Psoas muscle (tissue), 8 donors: ENCODE measurements at regions of chr3 and their contacts with region 1.

Region 1: DNA sequence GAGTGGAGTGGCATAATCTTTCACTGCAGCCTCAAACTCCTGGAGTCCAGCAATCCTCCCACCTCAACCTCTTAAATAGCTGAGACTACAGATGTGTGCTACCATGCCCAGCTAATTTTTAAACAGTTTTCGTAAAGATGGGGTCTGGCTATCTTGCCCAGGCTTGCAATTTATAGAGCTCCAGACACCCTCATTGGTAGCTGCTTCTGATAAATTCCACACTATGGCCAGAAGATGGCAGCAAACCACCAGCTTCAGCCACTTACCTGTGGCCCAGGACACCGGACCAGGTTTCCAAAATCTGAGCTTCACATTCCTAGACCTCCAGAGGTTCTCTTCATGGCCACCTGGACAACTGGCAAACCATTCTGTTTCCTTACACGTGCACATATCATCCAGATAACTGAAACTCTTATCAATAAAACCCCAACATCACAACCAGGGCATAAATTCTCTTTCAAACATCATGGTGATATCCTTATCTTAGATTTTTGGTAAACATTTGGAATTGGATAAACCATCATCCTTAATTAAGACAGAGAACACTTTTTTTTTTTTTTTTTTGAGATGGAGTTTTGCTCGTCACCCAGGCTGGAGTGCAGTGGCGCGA is 28.9 kb downstream of the FBXW12 start:
- DNase-seq: peak; percentile 28 to 56
- ATAC-seq: peak; percentile 61 to 87 (median 68)
- H3K4me3 ChIP-seq: no peak overlapping the region
- H3K27ac ChIP-seq: no peak overlapping the region
- H3K4me1 ChIP-seq: no peaks in the 10 kb centered on the region
- H3K27me3 ChIP-seq: peaks cover 0 to 5% (median 0%) of the 10 kb centered on the region in 3 donors
- CTCF ChIP-seq: peak; percentile 72

Region 2: GRCh38 chr3:48273594-48274211 is 127.2 kb before region 1 on chr3:
- intact Hi-C with region 1: loop called in 1 of 2 experiments (anchors 5 kb)
- DNase-seq: no peak
- ATAC-seq: peak; percentile 51 to 84 (median 70)
- H3K4me3 ChIP-seq: no peak overlapping the region
- H3K27ac ChIP-seq: no peak overlapping the region
- H3K4me1 ChIP-seq: no peaks in the 10 kb centered on the region
- H3K27me3 ChIP-seq: no peaks in the 10 kb centered on the region
- CTCF ChIP-seq: peak; percentile 75

Region 3: DNA sequence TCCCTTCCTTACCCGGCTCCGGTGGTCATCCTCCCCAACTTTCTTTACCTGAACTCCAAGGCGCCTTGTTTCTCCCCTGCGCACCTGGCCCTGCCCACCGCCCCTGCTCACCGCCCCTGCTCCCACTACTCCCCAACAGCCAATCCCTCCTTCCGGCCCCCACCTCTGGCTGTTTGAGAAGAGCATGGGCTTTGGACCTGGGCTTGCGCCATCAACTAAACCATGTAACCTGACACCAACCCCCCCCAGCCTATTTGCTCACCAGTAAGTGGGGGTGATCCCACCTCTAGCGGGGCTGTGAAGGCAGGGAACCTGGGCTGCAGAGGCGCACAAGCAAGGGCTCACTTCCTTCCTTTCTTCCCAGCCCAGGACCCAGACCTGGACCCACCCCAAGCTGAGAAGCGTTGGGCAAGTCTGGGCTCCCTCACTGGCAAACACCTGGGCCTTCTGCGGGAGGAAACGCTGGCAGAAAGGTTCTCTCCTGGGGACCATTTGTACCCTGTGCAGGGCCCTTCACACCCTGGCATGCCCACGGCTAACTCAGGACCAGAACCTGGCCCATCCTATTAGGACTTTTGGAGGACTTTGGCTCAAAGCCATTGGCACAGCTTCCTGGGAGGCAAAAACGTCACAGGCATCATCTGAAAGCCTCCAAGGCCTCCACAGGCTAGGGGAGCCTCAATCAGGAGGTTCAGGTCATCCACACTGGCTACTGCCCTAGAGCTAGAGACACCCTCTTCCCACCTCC is 29.2 kb after region 1 on chr3 and contains the start of gene PLXNB1:
- intact Hi-C with region 1: loop called (anchors 1 kb)
- DNase-seq: peak; percentile 53 to 67
- ATAC-seq: peak in 3 of 4 donors; percentile 31 to 41 (median 38)
- H3K4me3 ChIP-seq: peak within 1 kb of the TSS; percentile 84
- H3K27ac ChIP-seq: peak within 1 kb of the TSS; percentile 46
- H3K4me1 ChIP-seq: peaks cover 4% of the 10 kb centered on the region
- H3K27me3 ChIP-seq: peaks cover 0 to 11% (median 3%) of the 10 kb centered on the region in 3 donors
- CTCF ChIP-seq: no peak
- total RNA-seq, gene PLXNB1: 2.5 to 3.9 (median 2.8) TPM

Region 4: GRCh38 chr3:48439820-48440589 is 39.1 kb after region 1 on chr3 and contains the starts of genes CCDC51 and TMA7:
- intact Hi-C with region 1: loop called in 1 of 2 experiments (anchors 1 kb)
- DNase-seq: peak; percentile 98 to 99
- ATAC-seq: peak; percentile 97 to 100 (median 98)
- H3K4me3 ChIP-seq: peak within 1 kb of the TSS; percentile 89
- H3K27ac ChIP-seq: peak within 1 kb of the TSS; percentile 92
- H3K4me1 ChIP-seq: peaks cover 23% of the 10 kb centered on the region
- H3K27me3 ChIP-seq: no peaks in the 10 kb centered on the region
- CTCF ChIP-seq: no peak
- total RNA-seq, gene CCDC51: 5.3 to 9.5 (median 5.4) TPM
- total RNA-seq, gene TMA7: 156 to 218 (median 185) TPM

Region 5: DNA sequence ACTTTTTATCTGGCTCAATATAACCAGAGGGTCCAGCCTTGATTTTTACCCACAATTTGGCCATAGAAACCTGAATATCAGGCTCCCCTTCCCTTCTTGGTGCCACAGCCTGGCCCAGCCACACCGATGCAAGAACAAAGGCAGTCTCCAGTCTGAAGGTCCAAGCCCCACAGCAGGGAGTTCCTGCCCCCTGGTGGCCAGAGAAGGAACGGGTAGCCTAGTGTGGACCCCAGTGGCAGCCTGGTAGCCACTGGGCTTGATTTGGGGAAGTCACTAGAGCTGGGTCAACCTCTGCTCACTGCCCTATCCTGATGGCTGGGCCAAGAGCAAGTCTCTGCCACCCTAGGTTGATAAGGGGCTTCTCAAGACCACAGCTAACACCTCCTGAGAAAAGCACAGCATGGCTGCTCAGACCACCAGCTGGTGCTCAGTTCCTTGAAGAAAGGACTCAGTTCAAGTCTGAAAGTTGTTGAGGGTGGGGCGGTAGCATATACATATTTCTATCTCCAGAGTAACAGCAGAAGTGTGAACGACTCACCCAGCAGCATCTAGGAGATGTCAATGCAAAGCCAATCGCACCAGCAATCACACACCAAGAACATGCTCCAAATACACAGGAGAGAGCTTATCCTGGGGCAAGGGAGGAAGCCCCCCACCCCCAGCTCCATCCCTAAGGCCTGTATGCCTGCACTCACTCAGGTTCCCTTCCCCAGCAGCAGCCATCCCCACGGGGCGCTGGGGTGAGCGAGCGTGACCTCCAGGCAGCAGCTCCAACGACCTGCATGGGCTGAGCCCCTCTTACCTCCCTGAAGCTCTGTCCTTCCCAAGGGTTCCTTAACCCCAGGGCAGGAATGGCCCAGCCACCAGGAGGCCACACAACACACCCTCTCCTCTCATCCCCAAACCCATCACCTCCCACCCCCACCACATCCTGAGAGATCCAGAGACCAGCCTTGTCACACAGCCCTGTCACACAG is 148.1 kb after region 1 on chr3:
- intact Hi-C with region 1: loop called in 1 of 2 experiments (anchors 5 kb)
- DNase-seq: peak; percentile 88 to 91
- ATAC-seq: peak; percentile 93 to 99 (median 94)
- H3K4me3 ChIP-seq: no peak overlapping the region
- H3K27ac ChIP-seq: no peak overlapping the region
- H3K4me1 ChIP-seq: peaks cover under 1% of the 10 kb centered on the region
- H3K27me3 ChIP-seq: no peaks in the 10 kb centered on the region
- CTCF ChIP-seq: peak; percentile 94